ENCODE measurements at regions of chr13 and their contacts with region 1.

Region 1: GRCh38 chr13:34587576-34587975 is 354.5 kb upstream of the NBEA start:
- DNase-seq: peak in 2 of 10 donors; percentile 25 to 72
- H3K4me3 ChIP-seq: no peak overlapping the region
- H3K27ac ChIP-seq: peak overlapping the region in 16 of 59 donors; percentile 6 to 70 (median 34)
- H3K27me3 ChIP-seq: no peaks in the 10 kb centered on the region
- CTCF ChIP-seq: no peak

Region 2: GRCh38 chr13:34762312-34762711 is 174.7 kb after region 1 on chr13:
- intact Hi-C with region 1: loop called in 1 of 2 experiments (anchors 10 kb)
- DNase-seq: no peak
- H3K4me3 ChIP-seq: no peak overlapping the region
- H3K27ac ChIP-seq: no peak overlapping the region
- H3K27me3 ChIP-seq: no peaks in the 10 kb centered on the region
- CTCF ChIP-seq: no peak